Heart right ventricle (tissue), 16 donors: ENCODE measurements at regions of chr9 and their contacts with region 1.

Region 1: GRCh38 chr9:21965401-21965951 is 28.7 kb downstream of the CDKN2A start:
- DNase-seq: peak in 1 of 2 donors; percentile 40
- ATAC-seq: peak in 5 of 8 donors; percentile 20 to 79 (median 69)
- H3K4me3 ChIP-seq: peak overlapping the region in 9 of 10 donors; percentile 0 to 47 (median 21)
- H3K27ac ChIP-seq: no peak overlapping the region
- H3K4me1 ChIP-seq: peaks cover 6 to 31% (median 14%) of the 10 kb centered on the region in 9 donors
- H3K27me3 ChIP-seq: peaks cover 48 to 100% (median 91%) of the 10 kb centered on the region in 7 donors
- CTCF ChIP-seq: peak in 4 of 9 donors; percentile 16 to 39 (median 24)

Region 2: DNA sequence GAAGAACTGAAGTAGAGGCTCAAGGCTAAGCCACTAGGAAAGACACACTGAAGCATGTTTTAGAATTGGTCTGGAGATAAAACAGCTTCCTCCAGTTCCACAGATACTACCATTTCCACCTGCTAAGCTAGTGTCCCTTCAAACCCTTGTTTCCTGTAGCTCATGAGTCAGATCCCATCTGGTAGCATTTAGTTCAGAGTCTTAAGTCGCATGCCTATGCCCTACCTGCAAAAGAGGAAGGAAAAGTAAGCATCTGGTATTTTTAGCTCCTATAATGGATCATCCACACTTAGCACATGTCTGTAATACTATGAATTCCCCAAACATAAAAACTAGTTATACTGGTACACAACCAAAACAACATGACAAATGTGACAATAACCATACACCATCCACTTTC is 63.3 kb before region 1 on chr9:
- intact Hi-C with region 1: loop called in 2 of 10 experiments (anchors 10 kb)
- DNase-seq: no peak
- ATAC-seq: no peak
- H3K4me3 ChIP-seq: no peak overlapping the region
- H3K27ac ChIP-seq: no peak overlapping the region
- H3K4me1 ChIP-seq: no peaks in the 10 kb centered on the region
- H3K27me3 ChIP-seq: no peaks in the 10 kb centered on the region
- CTCF ChIP-seq: no peak

Region 3: GRCh38 chr9:21985964-21986667 is 20.6 kb after region 1 on chr9:
- intact Hi-C with region 1: loop called in 1 of 10 experiments (anchors 2 kb)
- DNase-seq: no peak
- ATAC-seq: no peak
- H3K4me3 ChIP-seq: no peak overlapping the region
- H3K27ac ChIP-seq: no peak overlapping the region
- H3K4me1 ChIP-seq: peaks cover 0 to 5% (median 0%) of the 10 kb centered on the region in 9 donors
- H3K27me3 ChIP-seq: peaks cover 0 to 98% (median 95%) of the 10 kb centered on the region in 7 donors
- CTCF ChIP-seq: no peak

Region 4: DNA sequence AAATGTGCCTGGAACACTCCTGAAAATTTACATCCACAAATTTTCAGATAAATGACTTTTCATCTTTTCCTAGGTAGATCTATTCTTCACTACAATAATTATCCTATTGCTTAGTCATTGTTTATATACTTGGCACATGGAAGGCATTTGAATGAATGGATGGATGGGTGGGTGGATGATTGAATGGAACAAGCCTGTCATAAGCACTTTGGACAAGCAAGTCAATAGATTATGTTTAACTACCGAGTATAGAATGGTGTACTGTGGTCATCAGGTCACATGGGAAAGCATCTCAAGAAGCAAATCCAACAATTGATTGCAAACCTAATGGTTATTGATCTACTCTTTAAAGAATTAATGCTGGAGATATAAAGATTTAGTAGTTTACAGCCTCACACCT is 366.7 kb after region 1 on chr9:
- intact Hi-C with region 1: no loop called
- DNase-seq: no peak
- ATAC-seq: no peak
- H3K4me3 ChIP-seq: no peak overlapping the region
- H3K27ac ChIP-seq: no peak overlapping the region
- H3K4me1 ChIP-seq: no peaks in the 10 kb centered on the region
- H3K27me3 ChIP-seq: no peaks in the 10 kb centered on the region
- CTCF ChIP-seq: no peak